GM12878 (cell line): ENCODE measurements at regions of chr7 and their contacts with region 1.

Region 1: GRCh38 chr7:100132697-100133151 is 6.0 kb downstream of the MBLAC1 start:
- DNase-seq: no peak
- ATAC-seq: peak; percentile 87
- H3K4me3 ChIP-seq: no peak overlapping the region
- H3K27ac ChIP-seq: no peak overlapping the region
- H3K4me1 ChIP-seq: peaks cover 11% of the 10 kb centered on the region
- H3K27me3 ChIP-seq: no peaks in the 10 kb centered on the region
- CTCF ChIP-seq: peak; percentile 96 to 97 (median 97); a peak in 5 of 6 replicates
- EP300 ChIP-seq: no peak
- POLR2A ChIP-seq: no peak
- RAD21 ChIP-seq: peak; percentile 96

Region 2: DNA sequence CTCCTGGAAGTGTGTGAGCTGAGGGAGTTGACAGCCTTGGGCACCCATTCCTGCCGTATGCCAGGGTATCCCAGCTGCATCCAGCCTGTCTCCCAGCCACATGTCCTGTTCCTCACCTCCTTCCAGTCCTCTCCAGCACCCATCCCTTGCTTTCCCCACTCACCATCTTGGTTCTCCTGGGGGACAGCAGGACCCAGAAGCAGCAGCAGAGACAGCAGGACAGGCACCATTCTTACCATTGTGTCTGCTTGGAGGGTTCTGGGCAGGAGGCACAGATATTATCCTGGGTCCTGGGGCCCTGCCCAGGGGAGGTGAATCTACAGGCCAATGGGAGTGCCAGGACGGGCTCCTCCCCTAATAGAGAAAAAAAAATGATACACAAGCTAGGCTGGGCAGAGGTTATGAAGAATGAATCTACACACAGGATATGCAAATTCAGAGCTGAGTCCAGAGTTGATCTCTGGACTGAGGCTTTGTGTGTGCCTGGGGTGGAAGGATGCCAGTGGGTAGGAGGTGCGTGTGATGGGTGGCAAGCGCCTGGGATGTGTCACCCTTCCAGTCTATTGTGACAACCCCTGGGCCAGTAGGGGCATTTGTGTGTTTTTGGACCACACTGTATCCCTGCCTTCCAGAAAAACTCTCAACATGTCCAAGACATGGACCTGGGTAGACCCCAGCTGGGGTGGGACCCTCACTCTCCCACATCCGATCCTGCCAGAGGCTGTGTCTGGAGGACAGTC is 156.8 kb before region 1 on chr7 and contains the start of gene AZGP1:
- CTCF ChIA-PET with region 1: interaction called, 55 read pairs
- POLR2A ChIA-PET with region 1: interaction called, 4 read pairs
- RAD21 ChIA-PET with region 1: interaction called, 5 read pairs
- SMC1A ChIA-PET with region 1: interaction called, 6 read pairs
- in situ Hi-C with region 1: no loop called
- intact Hi-C with region 1: loop called (anchors 5 kb)
- DNase-seq: no peak
- ATAC-seq: peak; percentile 68
- H3K4me3 ChIP-seq: no peak within 1 kb of the TSS
- H3K27ac ChIP-seq: no peak within 1 kb of the TSS
- H3K4me1 ChIP-seq: no peaks in the 10 kb centered on the region
- H3K27me3 ChIP-seq: no peaks in the 10 kb centered on the region
- CTCF ChIP-seq: no peak
- EP300 ChIP-seq: no peak
- POLR2A ChIP-seq: no peak
- RAD21 ChIP-seq: no peak
- polyA plus RNA-seq, gene AZGP1: not detected

Region 3: GRCh38 chr7:100101016-100101862 is 31.5 kb before region 1 on chr7 and contains the starts of genes AP4M1 and MCM7:
- CTCF ChIA-PET with region 1: interaction called, 11 read pairs
- POLR2A ChIA-PET with region 1: interaction called, 8 read pairs
- RAD21 ChIA-PET with region 1: interaction called, 9 read pairs
- SMC1A ChIA-PET with region 1: interaction called, 14 read pairs
- in situ Hi-C with region 1: no loop called
- intact Hi-C with region 1: loop called (anchors 1 kb)
- DNase-seq: peak; percentile 92
- ATAC-seq: peak; percentile 94
- H3K4me3 ChIP-seq: peak within 1 kb of the TSS; percentile 88
- H3K27ac ChIP-seq: peak within 1 kb of the TSS; percentile 97
- H3K4me1 ChIP-seq: peaks cover 16% of the 10 kb centered on the region
- H3K27me3 ChIP-seq: no peaks in the 10 kb centered on the region
- CTCF ChIP-seq: no peak
- EP300 ChIP-seq: no peak
- POLR2A ChIP-seq: peak; percentile 82
- RAD21 ChIP-seq: no peak
- polyA plus RNA-seq, gene AP4M1: 0.77 to 2.1 TPM
- polyA plus RNA-seq, gene MCM7: 227 to 234 TPM

Region 4: DNA sequence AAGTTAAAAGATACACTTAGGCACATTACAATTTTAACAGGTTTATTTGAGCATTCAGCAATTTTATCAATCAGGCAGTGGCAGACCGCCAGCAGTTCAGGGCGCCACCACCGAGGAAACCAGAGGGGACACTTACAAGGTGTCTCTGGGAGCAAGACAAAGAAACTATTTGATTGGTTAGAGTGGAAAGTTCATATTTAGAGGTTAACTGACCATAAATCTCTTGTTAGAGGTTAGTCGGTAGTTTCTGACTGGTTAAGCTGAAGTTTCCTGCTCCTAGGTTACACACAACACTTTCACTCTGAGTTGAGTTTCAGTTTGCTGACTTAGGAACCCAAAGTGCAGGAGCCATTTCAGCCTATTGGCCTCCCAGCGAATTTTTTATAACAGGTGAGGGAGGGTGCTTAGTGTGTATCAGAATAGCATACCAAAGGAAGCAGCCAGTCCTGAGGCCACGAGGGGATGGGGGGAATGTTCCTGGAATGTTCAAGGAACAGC is 76.2 kb after region 1 on chr7:
- CTCF ChIA-PET with region 1: interaction called, 26 read pairs
- POLR2A ChIA-PET with region 1: no interaction called
- RAD21 ChIA-PET with region 1: interaction called, 49 read pairs
- SMC1A ChIA-PET with region 1: interaction called, 9 read pairs
- in situ Hi-C with region 1: no loop called
- intact Hi-C with region 1: no loop called
- DNase-seq: peak; percentile 87
- ATAC-seq: peak; percentile 89
- H3K4me3 ChIP-seq: peak overlapping the region; percentile 56; the same call in 1 of the 2 replicates
- H3K27ac ChIP-seq: peak overlapping the region; percentile 57
- H3K4me1 ChIP-seq: peaks cover 51% of the 10 kb centered on the region
- H3K27me3 ChIP-seq: no peaks in the 10 kb centered on the region
- CTCF ChIP-seq: peak in 1 of 3 experiments; percentile 25; a peak in 1 of 6 replicates
- EP300 ChIP-seq: peak; percentile 27 to 74; a peak in 3 of 4 replicates
- POLR2A ChIP-seq: no peak
- RAD21 ChIP-seq: no peak

Region 5: GRCh38 chr7:100342765-100343164 is 210.0 kb after region 1 on chr7:
- CTCF ChIA-PET with region 1: interaction called, 69 read pairs
- POLR2A ChIA-PET with region 1: interaction called, 8 read pairs
- RAD21 ChIA-PET with region 1: interaction called, 7 read pairs
- SMC1A ChIA-PET with region 1: interaction called, 25 read pairs
- in situ Hi-C with region 1: no loop called
- intact Hi-C with region 1: loop called (anchors 5 kb)
- DNase-seq: no peak
- ATAC-seq: no peak
- H3K4me3 ChIP-seq: no peak overlapping the region
- H3K27ac ChIP-seq: no peak overlapping the region
- H3K4me1 ChIP-seq: peaks cover 15% of the 10 kb centered on the region
- H3K27me3 ChIP-seq: no peaks in the 10 kb centered on the region
- CTCF ChIP-seq: no peak
- EP300 ChIP-seq: no peak
- POLR2A ChIP-seq: no peak
- RAD21 ChIP-seq: no peak